MCF 10A (cell line): ENCODE measurements at regions of chr9 and their contacts with region 1.

Region 1: DNA sequence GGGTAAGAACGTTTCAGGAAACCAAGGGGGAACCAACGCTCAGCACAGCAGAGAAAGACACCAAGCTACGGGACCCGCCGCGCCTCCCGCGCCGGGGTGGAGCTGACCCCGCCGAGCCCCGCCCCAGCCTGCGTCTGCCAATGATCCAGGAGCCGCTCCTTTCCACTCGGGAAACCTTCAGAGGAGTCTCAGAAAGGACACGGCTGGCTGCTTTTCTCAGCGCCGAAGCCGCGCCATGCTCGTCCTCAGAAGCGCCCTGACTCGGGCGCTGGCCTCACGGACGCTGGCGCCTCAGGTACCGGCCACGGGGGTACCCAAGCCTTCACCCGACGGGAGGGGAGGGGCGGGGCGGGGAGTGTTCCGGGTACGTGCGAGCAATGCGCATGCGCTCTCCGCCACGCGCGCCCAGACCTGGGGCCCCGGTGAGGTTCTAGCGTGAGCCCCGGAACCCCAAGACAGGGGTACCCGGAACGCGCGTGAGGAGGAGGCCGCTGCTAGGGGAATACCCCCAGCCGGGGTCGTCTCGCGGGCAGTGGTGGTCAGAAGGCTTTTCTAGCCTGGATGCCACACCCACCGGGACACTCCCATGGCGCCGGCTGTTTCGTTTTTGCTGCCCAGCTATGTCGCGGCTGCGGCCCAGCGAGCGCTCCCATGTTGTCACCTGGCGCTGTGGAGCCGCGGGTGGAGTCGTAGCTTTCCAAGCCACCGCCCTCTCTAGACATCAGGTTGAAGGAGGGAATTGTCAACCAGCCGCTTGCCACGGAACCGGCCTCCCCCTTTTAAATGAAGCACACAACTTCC is at the start of gene NIPSNAP3A:
- DNase-seq: peak; percentile 83
- H3K4me3 Mint-ChIP-seq: peak within 1 kb of the TSS; percentile 85
- H3K27ac Mint-ChIP-seq: peak within 1 kb of the TSS; percentile 87
- H3K4me1 Mint-ChIP-seq: peaks cover 17% of the 10 kb centered on the region
- H3K27me3 Mint-ChIP-seq: no peaks in the 10 kb centered on the region
- CTCF ChIP-seq: no peak
- total RNA-seq, gene NIPSNAP3A: 15.4 and 15.5 TPM in 2 replicates

Region 2: GRCh38 chr9:104177003-104177611 is 570.7 kb before region 1 on chr9:
- CTCF ChIA-PET with region 1: interaction called, 11 read pairs
- POLR2A ChIA-PET with region 1: no interaction called
- intact Hi-C with region 1: loop called (anchors 1 kb)
- DNase-seq: peak; percentile 53
- H3K4me3 Mint-ChIP-seq: no peak overlapping the region
- H3K27ac Mint-ChIP-seq: no peak overlapping the region
- H3K4me1 Mint-ChIP-seq: no peaks in the 10 kb centered on the region
- H3K27me3 Mint-ChIP-seq: no peaks in the 10 kb centered on the region
- CTCF ChIP-seq: peak; percentile 58

Region 3: GRCh38 chr9:104608336-104608735 is 139.4 kb before region 1 on chr9:
- CTCF ChIA-PET with region 1: no interaction called
- POLR2A ChIA-PET with region 1: no interaction called
- intact Hi-C with region 1: loop called (anchors 10 kb)
- DNase-seq: peak; percentile 12
- H3K4me3 Mint-ChIP-seq: no peak overlapping the region
- H3K27ac Mint-ChIP-seq: no peak overlapping the region
- H3K4me1 Mint-ChIP-seq: peaks cover 6% of the 10 kb centered on the region
- H3K27me3 Mint-ChIP-seq: no peaks in the 10 kb centered on the region
- CTCF ChIP-seq: peak; percentile 17

Region 4: DNA sequence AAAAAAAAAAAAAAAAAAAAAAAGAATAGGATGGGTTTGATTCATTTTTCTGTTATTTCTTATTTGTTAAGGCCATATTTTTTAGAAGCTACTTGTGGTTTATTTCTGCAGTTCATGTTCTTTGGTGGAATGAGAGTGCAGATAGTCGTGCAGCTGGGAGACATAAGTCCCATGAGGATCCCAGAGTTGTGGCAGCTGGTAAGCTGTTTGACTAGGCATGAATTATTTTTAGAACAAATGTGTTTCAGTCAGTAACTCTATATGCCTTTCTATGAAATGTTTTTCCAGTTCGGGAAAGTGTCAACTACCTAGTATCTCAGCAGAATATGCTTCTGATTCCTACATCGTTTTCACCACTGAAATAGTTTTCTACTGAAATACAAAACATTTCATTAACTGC is 11.2 kb after region 1 on chr9:
- CTCF ChIA-PET with region 1: no interaction called
- POLR2A ChIA-PET with region 1: interaction called, 23 read pairs
- intact Hi-C with region 1: no loop called
- DNase-seq: no peak
- H3K4me3 Mint-ChIP-seq: no peak overlapping the region
- H3K27ac Mint-ChIP-seq: no peak overlapping the region
- H3K4me1 Mint-ChIP-seq: no peaks in the 10 kb centered on the region
- H3K27me3 Mint-ChIP-seq: no peaks in the 10 kb centered on the region
- CTCF ChIP-seq: no peak